SK-N-SH (cell line): ENCODE measurements at regions of chr2 and their contacts with region 1.

Region 1: GRCh38 chr2:85813982-85814801 is 60.4 kb downstream of the ATOH8 start:
- DNase-seq: peak; percentile 92
- H3K4me3 ChIP-seq: no peak overlapping the region
- H3K27ac ChIP-seq: no peak overlapping the region
- H3K4me1 ChIP-seq: peaks cover 0 to 17% of the 10 kb centered on the region in 2 experiments; a peak in 1 of 4 replicates
- H3K27me3 ChIP-seq: no peaks in the 10 kb centered on the region
- CTCF ChIP-seq: peak; percentile 94
- EP300 ChIP-seq: no peak
- RAD21 ChIP-seq: peak; percentile 100

Region 2: GRCh38 chr2:85642725-85643124 is 171.5 kb before region 1 on chr2:
- CTCF ChIA-PET with region 1: interaction called, 16 read pairs
- POLR2A ChIA-PET with region 1: no interaction called
- DNase-seq: no peak
- H3K4me3 ChIP-seq: no peak overlapping the region
- H3K27ac ChIP-seq: no peak overlapping the region
- H3K4me1 ChIP-seq: no peaks in the 10 kb centered on the region
- H3K27me3 ChIP-seq: no peaks in the 10 kb centered on the region
- CTCF ChIP-seq: no peak
- EP300 ChIP-seq: no peak
- RAD21 ChIP-seq: no peak

Region 3: GRCh38 chr2:85707304-85707703 is 106.9 kb before region 1 on chr2:
- CTCF ChIA-PET with region 1: interaction called, 13 read pairs
- POLR2A ChIA-PET with region 1: no interaction called
- DNase-seq: peak; percentile 70
- H3K4me3 ChIP-seq: no peak overlapping the region
- H3K27ac ChIP-seq: no peak overlapping the region
- H3K4me1 ChIP-seq: peaks cover 0 to 4% of the 10 kb centered on the region in 2 experiments; a peak in 2 of 4 replicates
- H3K27me3 ChIP-seq: no peaks in the 10 kb centered on the region
- CTCF ChIP-seq: peak; percentile 95
- EP300 ChIP-seq: no peak
- RAD21 ChIP-seq: peak; percentile 69

Region 4: GRCh38 chr2:85723707-85724360 is 90.4 kb before region 1 on chr2:
- CTCF ChIA-PET with region 1: interaction called, 231 read pairs
- POLR2A ChIA-PET with region 1: interaction called, 5 read pairs
- DNase-seq: no peak
- H3K4me3 ChIP-seq: no peak overlapping the region
- H3K27ac ChIP-seq: no peak overlapping the region
- H3K4me1 ChIP-seq: peaks cover 0 to 16% of the 10 kb centered on the region in 2 experiments; a peak in 2 of 4 replicates
- H3K27me3 ChIP-seq: no peaks in the 10 kb centered on the region
- CTCF ChIP-seq: no peak
- EP300 ChIP-seq: no peak
- RAD21 ChIP-seq: no peak

Region 5: DNA sequence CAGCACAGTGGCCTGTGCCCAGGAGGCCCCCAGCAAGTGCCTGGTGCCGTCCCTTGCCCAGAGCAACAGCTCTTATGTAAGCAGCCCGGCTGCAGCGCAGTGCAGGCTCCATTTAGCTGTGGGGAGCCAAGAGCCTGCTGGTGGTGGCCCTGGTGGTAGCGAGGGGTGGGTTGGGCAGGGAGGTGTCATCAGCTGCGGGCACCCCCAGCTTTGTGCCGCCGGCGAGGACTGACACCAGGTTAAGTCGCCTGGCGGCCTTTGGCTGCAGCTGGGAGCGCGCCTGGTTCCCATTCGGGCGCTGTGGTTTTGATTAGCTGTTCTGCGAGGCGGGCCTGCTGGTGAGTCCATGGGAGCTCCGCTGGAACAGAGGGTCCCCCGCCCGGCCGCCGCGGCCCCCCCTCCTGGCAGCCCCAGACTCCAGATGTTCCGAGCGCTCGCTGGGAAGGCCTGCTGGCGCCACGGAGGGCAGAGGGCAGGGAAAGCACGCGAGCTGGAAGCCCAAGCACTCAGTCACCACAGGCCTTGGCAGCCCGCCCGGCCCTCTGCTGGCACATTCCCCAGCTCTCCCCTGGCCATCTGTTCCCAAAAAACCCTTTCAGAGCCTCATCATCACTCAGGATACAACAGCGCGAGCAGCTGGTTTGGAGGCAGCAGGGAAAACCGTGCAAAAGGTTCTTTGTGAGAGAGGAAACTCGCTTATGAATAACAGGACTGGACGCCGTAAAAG is 42.0 kb before region 1 on chr2:
- CTCF ChIA-PET with region 1: interaction called, 80 read pairs
- POLR2A ChIA-PET with region 1: no interaction called
- DNase-seq: peak; percentile 96
- H3K4me3 ChIP-seq: peak overlapping the region; percentile 28 to 55
- H3K27ac ChIP-seq: peak overlapping the region; percentile 96 to 99
- H3K4me1 ChIP-seq: peaks cover 63 to 70% of the 10 kb centered on the region in 2 experiments
- H3K27me3 ChIP-seq: no peaks in the 10 kb centered on the region
- CTCF ChIP-seq: peak; percentile 46
- EP300 ChIP-seq: peak; percentile 92 to 100
- RAD21 ChIP-seq: peak; percentile 53

Region 6: DNA sequence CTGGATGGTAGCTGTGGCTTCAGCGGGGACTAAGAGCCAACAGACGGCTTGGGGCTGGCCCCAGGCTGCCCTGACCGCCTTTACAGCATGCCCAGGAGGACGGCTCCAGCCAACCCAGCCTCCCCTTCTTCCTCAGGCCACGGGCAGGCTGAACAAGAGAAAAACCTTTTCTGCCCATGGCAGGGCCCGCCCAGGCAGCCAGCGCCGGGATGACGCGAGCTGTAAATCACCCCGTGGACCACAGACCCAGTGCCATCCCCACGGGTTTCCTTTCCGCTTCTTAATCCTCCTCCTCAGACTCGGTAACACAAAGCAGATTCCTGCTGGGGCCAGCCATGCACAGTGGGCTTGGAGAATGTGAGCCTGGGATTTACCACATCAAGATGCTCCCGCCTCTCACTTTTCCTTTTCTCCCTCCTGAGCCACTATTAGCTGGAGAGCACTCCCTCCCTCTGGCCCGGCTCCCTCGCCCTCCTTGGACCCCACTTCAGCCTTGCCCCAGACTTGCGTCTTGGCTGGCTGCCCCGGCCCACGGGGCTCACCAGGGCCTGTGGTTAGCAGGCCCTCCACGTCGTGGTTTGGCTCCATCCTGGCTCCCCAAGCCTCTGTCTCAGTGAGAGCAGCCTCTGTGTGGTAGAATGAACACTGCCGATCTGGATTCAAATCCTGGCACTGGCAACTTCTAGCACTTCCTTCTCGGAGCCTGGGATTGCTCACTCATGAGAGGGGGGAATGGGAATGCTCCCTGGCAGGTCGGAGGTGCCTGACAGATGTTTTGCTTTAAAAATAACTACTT is 29.0 kb before region 1 on chr2:
- CTCF ChIA-PET with region 1: interaction called, 23 read pairs
- POLR2A ChIA-PET with region 1: no interaction called
- DNase-seq: no peak
- H3K4me3 ChIP-seq: no peak overlapping the region
- H3K27ac ChIP-seq: peak overlapping the region in 1 of 2 experiments; percentile 15; a peak in 1 of 4 replicates
- H3K4me1 ChIP-seq: peaks cover 7 to 13% of the 10 kb centered on the region in 2 experiments; a peak in 3 of 4 replicates
- H3K27me3 ChIP-seq: no peaks in the 10 kb centered on the region
- CTCF ChIP-seq: no peak
- EP300 ChIP-seq: peak in 1 of 2 experiments; percentile 78; a peak in 1 of 4 replicates
- RAD21 ChIP-seq: no peak